ENCODE measurements at regions of chr1 and their contacts with region 1.

Region 1: GRCh38 chr1:235375919-235376605 is 8.8 kb downstream of the TBCE start:
- DNase-seq: no peak
- H3K4me3 Mint-ChIP-seq: no peak overlapping the region
- H3K27ac Mint-ChIP-seq: peak overlapping the region; percentile 39
- H3K4me1 Mint-ChIP-seq: no peaks in the 10 kb centered on the region
- H3K27me3 Mint-ChIP-seq: no peaks in the 10 kb centered on the region
- CTCF ChIP-seq: no peak

Region 2: GRCh38 chr1:235391874-235392273 is 15.8 kb after region 1 on chr1:
- CTCF ChIA-PET with region 1: interaction called, 9 read pairs
- POLR2A ChIA-PET with region 1: interaction called, 11 read pairs
- intact Hi-C with region 1: no loop called
- DNase-seq: peak; percentile 22
- H3K4me3 Mint-ChIP-seq: no peak overlapping the region
- H3K27ac Mint-ChIP-seq: no peak overlapping the region
- H3K4me1 Mint-ChIP-seq: peaks cover 3% of the 10 kb centered on the region
- H3K27me3 Mint-ChIP-seq: no peaks in the 10 kb centered on the region
- CTCF ChIP-seq: no peak

Region 3: DNA sequence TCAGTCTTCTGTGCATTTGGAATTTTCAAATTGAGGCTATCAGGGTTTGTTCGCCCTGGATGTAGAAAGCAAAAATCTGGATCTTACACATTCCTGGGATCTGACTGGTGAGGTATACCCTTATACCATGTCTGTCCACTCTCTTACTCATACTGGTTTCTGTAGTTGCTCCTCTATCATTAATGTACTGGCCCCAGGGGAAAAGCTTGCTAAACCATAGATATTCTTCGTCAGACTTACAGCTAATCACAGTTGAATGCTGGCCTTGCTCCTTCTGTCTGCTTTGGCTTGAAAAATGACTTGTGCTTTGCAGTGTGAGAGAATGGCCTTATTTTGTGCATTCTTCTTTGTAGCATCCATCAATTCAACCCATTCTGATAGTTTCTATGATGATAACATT is 21.7 kb after region 1 on chr1:
- CTCF ChIA-PET with region 1: interaction called, 6 read pairs
- POLR2A ChIA-PET with region 1: interaction called, 11 read pairs
- intact Hi-C with region 1: no loop called
- DNase-seq: peak; percentile 94
- H3K4me3 Mint-ChIP-seq: no peak overlapping the region
- H3K27ac Mint-ChIP-seq: no peak overlapping the region
- H3K4me1 Mint-ChIP-seq: peaks cover 39% of the 10 kb centered on the region
- H3K27me3 Mint-ChIP-seq: no peaks in the 10 kb centered on the region
- CTCF ChIP-seq: no peak

Measured in MCF 10A (cell line).